CD4-positive, alpha-beta memory T cell (primary cell): ENCODE measurements at regions of chr6 and their contacts with region 1.

Region 1: DNA sequence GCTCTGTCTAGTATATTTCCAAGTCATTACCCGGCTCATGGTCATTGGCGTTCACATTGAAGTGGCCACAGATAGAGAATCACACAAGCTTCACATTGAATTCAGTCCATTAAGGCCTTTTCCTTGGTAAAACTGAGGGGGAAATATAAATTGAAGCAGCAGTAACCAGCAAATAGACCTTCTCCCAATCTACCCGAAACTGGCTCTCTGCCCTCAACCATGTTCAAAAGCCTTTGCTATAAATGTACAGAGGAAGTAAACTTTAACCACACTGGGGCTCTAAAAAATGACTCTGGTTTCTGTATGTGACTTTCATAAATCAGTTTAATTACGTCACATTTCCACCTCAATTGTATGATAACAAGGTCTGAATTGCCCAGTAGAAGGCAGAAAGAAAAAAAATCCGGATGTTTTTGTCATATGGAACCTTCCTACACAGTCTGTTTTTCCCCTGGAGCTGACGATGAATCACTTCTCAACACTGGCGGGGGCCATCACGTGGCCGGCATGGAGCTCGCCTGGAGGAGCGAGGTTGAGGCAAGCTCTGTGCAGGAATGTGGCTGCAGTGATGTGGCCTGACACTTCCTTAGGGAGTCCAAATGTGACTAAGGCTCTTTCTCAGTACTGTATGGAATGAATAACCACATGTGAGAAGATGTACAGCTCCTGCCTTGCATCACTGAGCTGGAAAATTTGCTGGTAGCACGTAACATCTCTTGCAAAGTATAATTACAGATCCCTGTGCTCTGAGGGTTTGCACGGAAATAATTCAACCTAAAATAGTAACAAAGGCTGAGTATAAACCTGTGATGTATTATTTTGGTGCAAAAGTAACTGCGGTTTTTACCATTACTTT is 58.6 kb upstream of the SNX9 start:
- DNase-seq: peak; percentile 86 to 96 (median 91)
- H3K4me3 ChIP-seq: peak overlapping the region; percentile 0 to 49
- H3K4me3 Mint-ChIP-seq: peak overlapping the region; percentile 79 to 88 (median 82)
- H3K27ac ChIP-seq: peak overlapping the region; percentile 49
- H3K27ac Mint-ChIP-seq: peak overlapping the region; percentile 94 to 98 (median 95)
- H3K4me1 ChIP-seq: peaks cover 65% of the 10 kb centered on the region
- H3K4me1 Mint-ChIP-seq: peaks cover 50 to 72% (median 58%) of the 10 kb centered on the region in 4 donors
- H3K27me3 ChIP-seq: no peaks in the 10 kb centered on the region
- H3K27me3 Mint-ChIP-seq: peaks cover 2 to 4% of the 10 kb centered on the region in 2 donors

Region 2: GRCh38 chr6:157823001-157823527 is 58.7 kb after region 1 on chr6 and contains the start of gene SNX9:
- CTCF ChIA-PET with region 1: no interaction called
- POLR2A ChIA-PET with region 1: interaction called, 3 read pairs
- intact Hi-C with region 1: loop called (anchors 1 kb)
- DNase-seq: peak; percentile 53 to 66 (median 58)
- H3K4me3 ChIP-seq: peak within 1 kb of the TSS; percentile 21 to 62
- H3K4me3 Mint-ChIP-seq: peak within 1 kb of the TSS; percentile 91 to 99 (median 96)
- H3K27ac ChIP-seq: peak within 1 kb of the TSS; percentile 78
- H3K27ac Mint-ChIP-seq: peak within 1 kb of the TSS; percentile 93 to 99 (median 98)
- H3K4me1 ChIP-seq: peaks cover 18% of the 10 kb centered on the region
- H3K4me1 Mint-ChIP-seq: peaks cover 18 to 32% (median 22%) of the 10 kb centered on the region in 4 donors
- H3K27me3 ChIP-seq: no peaks in the 10 kb centered on the region
- H3K27me3 Mint-ChIP-seq: peaks cover 0 to 1% of the 10 kb centered on the region in 2 donors
- total RNA-seq, gene SNX9: 21.5 to 21.9 TPM

Region 3: DNA sequence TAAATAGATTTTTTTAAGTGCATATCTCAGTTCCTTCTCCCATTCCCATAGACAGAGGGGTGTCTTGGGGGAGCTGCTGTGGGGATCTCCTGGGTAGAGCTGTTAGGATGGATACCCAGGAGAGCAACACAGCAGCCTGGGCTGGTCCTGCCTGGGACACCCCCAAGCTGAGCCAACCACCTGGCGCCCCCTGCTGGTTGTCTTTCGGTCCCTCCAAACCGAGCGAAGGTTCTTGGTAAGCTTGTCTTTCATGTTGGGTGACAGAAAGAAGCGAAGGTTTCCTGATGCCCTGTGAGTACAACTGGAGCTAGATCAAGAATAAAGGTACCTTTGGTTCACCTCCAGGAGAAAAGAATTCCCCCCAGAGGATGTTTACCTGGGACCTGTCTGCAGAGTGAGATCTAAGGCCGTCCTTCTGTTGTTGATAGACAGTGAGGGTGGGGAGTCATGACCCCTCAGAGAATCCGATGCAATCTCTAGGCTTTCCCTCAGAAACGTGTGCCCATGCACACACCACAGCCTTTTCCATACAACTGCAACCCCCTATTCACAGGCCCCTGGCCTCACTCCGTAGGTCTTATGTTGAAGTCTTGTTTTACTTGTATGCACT is 109.4 kb after region 1 on chr6:
- CTCF ChIA-PET with region 1: interaction called, 314 read pairs
- POLR2A ChIA-PET with region 1: interaction called, 10 read pairs
- intact Hi-C with region 1: no loop called
- DNase-seq: peak; percentile 72 to 76 (median 75)
- H3K4me3 ChIP-seq: no peak overlapping the region
- H3K4me3 Mint-ChIP-seq: peak overlapping the region in 1 of 8 donors; percentile 40
- H3K27ac ChIP-seq: no peak overlapping the region
- H3K27ac Mint-ChIP-seq: peak overlapping the region in 5 of 7 donors; percentile 65 to 77 (median 75)
- H3K4me1 ChIP-seq: peaks cover 9% of the 10 kb centered on the region
- H3K4me1 Mint-ChIP-seq: peaks cover 6 to 21% (median 12%) of the 10 kb centered on the region in 4 donors
- H3K27me3 ChIP-seq: no peaks in the 10 kb centered on the region
- H3K27me3 Mint-ChIP-seq: no peaks in the 10 kb centered on the region

Region 4: DNA sequence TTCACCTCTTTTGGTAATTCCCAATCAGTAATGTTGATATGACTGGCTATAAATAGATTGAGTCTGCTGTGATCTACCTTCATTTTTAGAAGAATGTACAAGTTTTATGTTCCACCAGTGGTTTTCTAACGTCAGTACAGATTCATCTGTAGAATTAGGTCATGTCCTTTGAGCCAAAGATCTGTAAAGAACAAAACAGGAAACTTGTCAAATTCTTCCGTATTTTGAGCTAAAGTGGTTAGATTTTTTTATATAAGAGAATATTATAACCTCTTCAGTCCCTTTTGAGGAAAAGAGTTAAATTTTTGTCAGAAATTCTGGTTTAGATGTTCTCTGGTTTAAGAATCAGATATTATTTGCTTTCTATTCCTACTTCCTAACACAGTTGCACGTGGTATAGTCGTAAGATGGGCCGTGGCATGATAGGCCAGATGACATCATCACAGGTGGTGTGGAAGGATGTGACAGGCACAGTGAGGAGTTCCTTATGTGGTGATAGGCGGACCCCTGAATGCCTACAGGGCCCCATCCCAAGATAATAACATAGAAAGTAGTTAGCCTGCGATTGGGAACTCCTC is 120.9 kb after region 1 on chr6:
- CTCF ChIA-PET with region 1: interaction called, 314 read pairs
- POLR2A ChIA-PET with region 1: interaction called, 21 read pairs
- intact Hi-C with region 1: loop called (anchors 2 kb)
- DNase-seq: peak; percentile 73 to 88 (median 86)
- H3K4me3 ChIP-seq: peak overlapping the region in 1 of 2 donors; percentile 21
- H3K4me3 Mint-ChIP-seq: peak overlapping the region in 7 of 8 donors; percentile 7 to 78 (median 42)
- H3K27ac ChIP-seq: peak overlapping the region; percentile 55
- H3K27ac Mint-ChIP-seq: peak overlapping the region; percentile 90 to 98 (median 96)
- H3K4me1 ChIP-seq: peaks cover 35% of the 10 kb centered on the region
- H3K4me1 Mint-ChIP-seq: peaks cover 33 to 74% (median 44%) of the 10 kb centered on the region in 4 donors
- H3K27me3 ChIP-seq: no peaks in the 10 kb centered on the region
- H3K27me3 Mint-ChIP-seq: no peaks in the 10 kb centered on the region

Region 5: DNA sequence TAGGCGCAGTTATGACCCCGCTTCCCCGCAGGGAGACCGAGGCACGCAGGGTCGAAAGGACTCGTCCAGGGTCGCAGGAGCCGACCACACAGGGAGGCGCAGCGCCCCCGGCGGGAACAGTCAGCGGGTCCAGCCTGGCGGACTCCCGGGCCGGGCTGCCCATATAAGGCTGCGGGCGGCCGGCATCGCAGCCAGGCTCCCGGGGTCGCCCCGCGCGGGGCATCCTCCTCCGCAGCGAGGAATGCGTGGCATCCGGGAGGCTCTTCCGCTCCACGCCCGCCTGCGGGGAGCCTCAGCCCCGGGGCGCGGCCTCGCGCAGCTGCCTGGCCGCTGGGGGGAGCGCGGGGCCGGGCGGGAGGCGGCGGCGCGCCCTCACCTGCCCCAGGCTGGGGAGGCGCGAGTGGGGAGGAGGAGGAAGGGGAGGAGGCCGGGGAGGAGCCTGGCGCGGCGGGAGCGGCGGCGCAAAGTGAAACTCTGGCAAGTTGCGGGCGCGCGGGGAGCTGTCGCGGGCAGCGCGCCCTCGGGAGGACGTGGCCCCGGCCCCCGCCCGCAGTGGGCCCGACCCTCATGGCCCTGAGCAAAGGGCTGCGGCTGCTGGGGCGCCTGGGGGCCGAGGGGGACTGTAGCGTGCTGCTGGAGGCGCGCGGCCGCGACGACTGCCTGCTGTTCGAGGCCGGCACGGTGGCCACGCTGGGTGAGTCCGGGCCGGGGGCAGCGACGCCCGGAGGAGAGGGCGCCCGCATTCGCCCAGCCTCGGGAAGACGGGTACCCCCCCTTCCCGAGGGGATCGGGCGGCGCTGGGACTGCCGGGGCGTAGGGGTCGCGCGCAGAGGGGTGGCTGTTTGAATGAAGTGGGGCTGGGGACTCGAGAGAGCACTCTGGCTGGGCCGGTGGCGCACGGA is 217.2 kb after region 1 on chr6 and contains the start of gene SYNJ2:
- CTCF ChIA-PET with region 1: no interaction called
- POLR2A ChIA-PET with region 1: no interaction called
- intact Hi-C with region 1: loop called (anchors 5 kb)
- DNase-seq: peak; percentile 86 to 89 (median 87)
- H3K4me3 ChIP-seq: peak within 1 kb of the TSS; percentile 76 to 88
- H3K4me3 Mint-ChIP-seq: peak within 1 kb of the TSS; percentile 88 to 94 (median 92)
- H3K27ac ChIP-seq: peak within 1 kb of the TSS; percentile 71
- H3K27ac Mint-ChIP-seq: peak within 1 kb of the TSS; percentile 85 to 93 (median 90)
- H3K4me1 ChIP-seq: peaks cover 44% of the 10 kb centered on the region
- H3K4me1 Mint-ChIP-seq: peaks cover 24 to 53% (median 39%) of the 10 kb centered on the region in 4 donors
- H3K27me3 ChIP-seq: no peaks in the 10 kb centered on the region
- H3K27me3 Mint-ChIP-seq: no peaks in the 10 kb centered on the region
- total RNA-seq, gene SYNJ2: 17.2 to 17.4 TPM

Region 6: GRCh38 chr6:158168040-158168289 is 403.6 kb after region 1 on chr6 and contains the start of gene SERAC1:
- CTCF ChIA-PET with region 1: no interaction called
- POLR2A ChIA-PET with region 1: no interaction called
- intact Hi-C with region 1: loop called (anchors 1 kb)
- DNase-seq: no peak
- H3K4me3 ChIP-seq: peak within 1 kb of the TSS; percentile 84 to 99
- H3K4me3 Mint-ChIP-seq: peak within 1 kb of the TSS; percentile 95 to 99 (median 96)
- H3K27ac ChIP-seq: peak within 1 kb of the TSS; percentile 88
- H3K27ac Mint-ChIP-seq: peak within 1 kb of the TSS; percentile 97 to 100 (median 99)
- H3K4me1 ChIP-seq: peaks cover 17% of the 10 kb centered on the region
- H3K4me1 Mint-ChIP-seq: peaks cover 7 to 27% (median 17%) of the 10 kb centered on the region in 4 donors
- H3K27me3 ChIP-seq: no peaks in the 10 kb centered on the region
- H3K27me3 Mint-ChIP-seq: no peaks in the 10 kb centered on the region
- total RNA-seq, gene SERAC1: 4.9 to 5.5 TPM